Activated CD4-positive, alpha-beta memory T cell treated with anti-CD3 and anti-CD28 coated beads for 36 hours (primary cell): ENCODE measurements at regions of chr15 and their contacts with region 1.

Region 1: DNA sequence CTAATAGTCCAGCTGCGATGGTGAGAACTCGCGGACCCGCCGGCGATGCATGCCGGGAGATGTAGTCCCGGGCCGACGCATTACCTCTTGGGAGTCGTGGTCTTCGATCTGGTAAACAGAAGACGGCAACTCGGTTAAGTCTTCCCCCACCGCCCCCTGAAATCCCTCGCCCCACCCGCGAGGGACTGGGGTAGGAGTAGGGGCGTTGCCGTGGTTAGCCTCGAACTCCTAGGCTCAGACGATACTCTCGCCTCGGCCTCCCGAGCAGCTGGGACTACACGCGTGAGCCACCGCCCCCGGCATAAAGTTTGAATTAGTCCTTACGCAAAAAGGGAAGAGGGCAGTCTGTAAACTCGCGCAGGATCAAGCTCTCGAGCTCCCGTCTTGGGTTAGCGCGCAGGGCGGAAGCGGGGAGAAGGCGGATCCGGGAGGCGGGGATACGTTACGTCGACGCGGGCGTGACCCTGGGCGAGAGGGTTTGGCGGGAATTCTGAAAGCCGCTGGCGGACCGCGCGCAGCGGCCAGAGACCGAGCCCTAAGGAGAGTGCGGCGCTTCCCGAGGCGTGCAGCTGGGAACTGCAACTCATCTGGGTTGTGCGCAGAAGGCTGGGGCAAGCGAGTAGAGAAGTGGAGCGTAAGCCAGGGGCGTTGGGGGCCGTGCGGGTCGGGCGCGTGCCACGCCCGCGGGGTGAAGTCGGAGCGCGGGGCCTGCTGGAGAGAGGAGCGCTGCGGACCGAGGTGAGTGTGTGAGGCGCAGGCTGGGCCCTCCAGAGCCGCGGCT is at the start of gene RAD51:
- DNase-seq: peak; percentile 96
- H3K4me3 Mint-ChIP-seq: peak within 1 kb of the TSS; percentile 91
- H3K27ac Mint-ChIP-seq: peak within 1 kb of the TSS; percentile 98
- H3K4me1 Mint-ChIP-seq: peaks cover 27% of the 10 kb centered on the region
- H3K27me3 Mint-ChIP-seq: no peaks in the 10 kb centered on the region
- total RNA-seq, gene RAD51: 67.1 to 70.0 TPM

Region 2: DNA sequence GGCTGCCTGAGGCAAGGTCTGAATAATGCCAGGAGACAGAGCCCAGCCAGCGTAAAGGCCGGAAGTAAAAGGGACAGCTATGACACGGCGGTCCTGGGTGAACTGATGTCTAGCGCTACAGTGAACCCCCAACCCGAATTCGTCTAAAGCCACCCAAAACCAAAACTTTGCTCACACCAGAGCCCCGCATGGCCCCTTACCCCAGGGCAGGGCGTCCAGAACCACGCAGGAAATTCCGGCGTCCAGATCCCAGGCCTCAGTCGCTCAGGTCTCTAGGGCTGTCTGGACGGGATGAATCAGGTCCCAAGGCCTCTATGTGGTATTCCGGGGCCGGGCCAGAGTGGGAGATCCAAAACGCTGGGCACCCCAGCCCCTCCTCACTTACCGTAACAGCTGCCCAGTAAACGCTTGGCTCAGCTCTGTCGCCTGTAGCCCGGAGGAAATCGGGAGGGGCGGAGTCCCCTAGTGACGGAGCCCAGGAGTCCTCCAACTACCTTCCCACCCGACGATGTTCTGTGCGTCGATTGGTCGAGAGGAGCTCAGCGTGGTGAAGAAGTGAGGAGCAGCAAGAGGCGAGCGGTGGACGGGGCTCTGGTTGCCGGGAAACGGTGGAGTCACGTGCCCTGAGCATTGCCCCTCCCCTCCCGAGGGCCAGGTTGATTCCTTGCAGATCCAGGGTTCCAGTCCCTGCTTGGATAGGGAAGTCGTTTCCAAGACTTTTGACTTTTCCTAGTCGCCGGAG is 130.1 kb before region 1 on chr15 and contains the start of gene CCDC32:
- CTCF ChIA-PET with region 1: interaction called, 3 read pairs
- POLR2A ChIA-PET with region 1: interaction called, 6 read pairs
- intact Hi-C with region 1: loop called (anchors 2 kb)
- DNase-seq: peak; percentile 98
- H3K4me3 Mint-ChIP-seq: peak within 1 kb of the TSS; percentile 96
- H3K27ac Mint-ChIP-seq: peak within 1 kb of the TSS; percentile 92
- H3K4me1 Mint-ChIP-seq: peaks cover 48% of the 10 kb centered on the region
- H3K27me3 Mint-ChIP-seq: peaks cover 2% of the 10 kb centered on the region
- total RNA-seq, gene CCDC32: 28.6 to 29.2 TPM

Region 3: GRCh38 chr15:40684381-40684780 is 10.5 kb before region 1 on chr15:
- CTCF ChIA-PET with region 1: interaction called, 9 read pairs
- POLR2A ChIA-PET with region 1: interaction called, 6 read pairs
- intact Hi-C with region 1: loop called (anchors 2 kb)
- DNase-seq: no peak
- H3K4me3 Mint-ChIP-seq: no peak overlapping the region
- H3K27ac Mint-ChIP-seq: no peak overlapping the region
- H3K4me1 Mint-ChIP-seq: no peaks in the 10 kb centered on the region
- H3K27me3 Mint-ChIP-seq: no peaks in the 10 kb centered on the region

Region 4: GRCh38 chr15:40716165-40716564 is 21.3 kb after region 1 on chr15:
- CTCF ChIA-PET with region 1: no interaction called
- POLR2A ChIA-PET with region 1: no interaction called
- intact Hi-C with region 1: no loop called
- DNase-seq: no peak
- H3K4me3 Mint-ChIP-seq: no peak overlapping the region
- H3K27ac Mint-ChIP-seq: no peak overlapping the region
- H3K4me1 Mint-ChIP-seq: no peaks in the 10 kb centered on the region
- H3K27me3 Mint-ChIP-seq: no peaks in the 10 kb centered on the region

Region 5: GRCh38 chr15:40743921-40744814 is 49.3 kb after region 1 on chr15:
- CTCF ChIA-PET with region 1: interaction called, 17 read pairs
- POLR2A ChIA-PET with region 1: interaction called, 16 read pairs
- intact Hi-C with region 1: loop called (anchors 1 kb)
- DNase-seq: peak; percentile 86
- H3K4me3 Mint-ChIP-seq: peak overlapping the region; percentile 49
- H3K27ac Mint-ChIP-seq: peak overlapping the region; percentile 89
- H3K4me1 Mint-ChIP-seq: peaks cover 29% of the 10 kb centered on the region
- H3K27me3 Mint-ChIP-seq: no peaks in the 10 kb centered on the region

Region 6: DNA sequence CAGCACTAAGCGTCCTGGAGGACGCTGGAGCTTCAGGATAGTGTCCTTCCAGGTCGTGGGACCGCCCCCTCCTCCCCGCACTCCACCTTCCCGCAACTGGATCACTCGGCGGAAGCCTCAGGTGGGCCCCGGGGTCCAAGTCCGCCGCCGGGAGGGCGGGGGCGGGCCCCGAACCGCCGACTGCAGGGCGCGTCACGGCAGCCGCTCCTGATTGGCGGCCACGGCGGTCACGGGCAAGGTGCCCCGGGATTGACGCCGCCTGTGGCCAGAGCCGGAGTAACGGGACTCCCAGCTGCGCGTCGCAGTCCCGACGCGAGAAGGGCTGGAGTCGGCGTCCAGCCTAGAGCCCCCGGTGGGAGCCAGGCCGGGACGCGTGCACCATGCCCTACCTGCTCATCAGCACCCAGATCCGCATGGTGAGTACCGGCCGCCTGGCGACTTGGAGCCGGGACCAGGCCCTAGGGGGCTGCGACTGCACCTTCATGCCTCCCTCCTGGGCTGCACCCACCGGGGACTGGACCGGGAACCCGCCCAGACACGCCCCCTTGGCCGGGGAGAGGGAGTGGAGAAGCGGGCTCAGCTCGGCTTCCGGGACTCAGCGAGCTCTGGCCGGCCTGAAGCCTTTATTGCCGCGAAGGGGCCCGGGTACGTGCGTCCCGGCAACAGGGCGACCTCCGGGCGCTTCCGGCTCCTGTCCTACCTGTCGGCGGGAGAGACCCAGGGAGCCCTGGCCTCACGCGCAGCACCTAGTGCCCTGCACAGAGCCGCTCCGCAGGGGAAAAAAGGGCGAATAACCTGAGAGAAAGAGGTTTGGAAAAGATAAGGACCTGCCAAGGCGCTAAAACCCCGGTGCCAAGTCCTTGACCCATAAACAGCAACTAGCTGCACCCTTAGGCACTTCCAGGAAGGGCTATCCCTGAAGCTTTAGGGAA is 69.2 kb after region 1 on chr15 and contains the start of gene GCHFR:
- CTCF ChIA-PET with region 1: no interaction called
- POLR2A ChIA-PET with region 1: interaction called, 18 read pairs
- intact Hi-C with region 1: no loop called
- DNase-seq: peak; percentile 82
- H3K4me3 Mint-ChIP-seq: peak within 1 kb of the TSS; percentile 63
- H3K27ac Mint-ChIP-seq: peak within 1 kb of the TSS; percentile 79
- H3K4me1 Mint-ChIP-seq: peaks cover 31% of the 10 kb centered on the region
- H3K27me3 Mint-ChIP-seq: no peaks in the 10 kb centered on the region
- total RNA-seq, gene GCHFR: 36.0 to 40.2 TPM

Region 7: GRCh38 chr15:40857601-40858341 is 162.9 kb after region 1 on chr15:
- CTCF ChIA-PET with region 1: interaction called, 11 read pairs
- POLR2A ChIA-PET with region 1: no interaction called
- intact Hi-C with region 1: no loop called
- DNase-seq: peak; percentile 88
- H3K4me3 Mint-ChIP-seq: no peak overlapping the region
- H3K27ac Mint-ChIP-seq: no peak overlapping the region
- H3K4me1 Mint-ChIP-seq: peaks cover 5% of the 10 kb centered on the region
- H3K27me3 Mint-ChIP-seq: no peaks in the 10 kb centered on the region